ENCODE measurements at regions of chr5 and their contacts with region 1.

Region 1: GRCh38 chr5:69369369-69370121 is at the starts of genes AK6, RAD17 and TAF9:
- DNase-seq: peak; percentile 94 to 95
- H3K4me3 ChIP-seq: peak within 1 kb of the TSS; percentile 67
- H3K4me3 Mint-ChIP-seq: peak within 1 kb of the TSS; percentile 90
- H3K27ac Mint-ChIP-seq: peak within 1 kb of the TSS; percentile 99
- H3K4me1 ChIP-seq: peaks cover 15% of the 10 kb centered on the region
- H3K4me1 Mint-ChIP-seq: peaks cover 8% of the 10 kb centered on the region
- H3K27me3 ChIP-seq: no peaks in the 10 kb centered on the region
- H3K27me3 Mint-ChIP-seq: no peaks in the 10 kb centered on the region
- CTCF ChIP-seq: no peak
- total RNA-seq, gene AK6: 66.8 and 75.1 TPM in 2 replicates
- total RNA-seq, gene RAD17: 33.8 and 36.0 TPM in 2 replicates
- total RNA-seq, gene TAF9: 92.5 and 101 TPM in 2 replicates

Region 2: DNA sequence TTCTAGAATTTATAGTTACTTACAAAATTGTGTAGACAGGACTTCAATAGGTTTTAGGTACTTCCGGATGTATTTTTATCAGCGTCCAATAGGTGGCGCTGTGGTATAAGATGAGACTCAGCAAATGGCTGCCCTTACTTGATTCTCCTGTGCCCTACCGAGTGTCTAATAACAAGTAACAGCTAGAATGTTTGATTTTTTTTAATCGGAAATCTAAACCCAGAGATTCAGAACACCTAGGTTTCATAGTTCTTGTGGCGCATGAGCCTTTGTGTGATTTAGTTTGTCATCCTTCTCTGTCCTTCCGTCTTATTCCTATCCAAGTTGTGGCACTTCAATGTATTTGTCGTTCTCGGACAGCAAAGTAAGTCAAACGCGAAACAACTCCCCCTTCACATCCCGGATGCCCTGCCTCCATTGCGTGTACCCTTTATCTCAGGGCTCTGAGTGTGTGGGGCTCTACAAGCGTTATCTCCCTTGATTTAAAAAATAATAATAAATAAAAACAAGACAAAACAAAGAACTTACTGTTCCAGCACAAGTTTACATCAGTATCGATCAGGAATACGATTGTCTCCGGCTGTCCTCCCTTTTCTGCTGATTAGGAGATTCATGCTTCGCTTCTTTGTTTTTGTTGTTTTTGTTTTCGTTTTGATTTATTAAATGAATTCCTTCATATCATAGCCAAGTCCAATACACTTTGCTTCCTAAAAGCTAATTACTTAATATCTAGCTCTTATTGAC is 326.5 kb before region 1 on chr5:
- CTCF ChIA-PET with region 1: no interaction called
- POLR2A ChIA-PET with region 1: no interaction called
- intact Hi-C with region 1: loop called (anchors 5 kb)
- DNase-seq: peak; percentile 80 to 81
- H3K4me3 ChIP-seq: peak overlapping the region; percentile 45
- H3K4me3 Mint-ChIP-seq: peak overlapping the region; percentile 89
- H3K27ac Mint-ChIP-seq: peak overlapping the region; percentile 71
- H3K4me1 ChIP-seq: peaks cover 6% of the 10 kb centered on the region; the same call in 1 of the 2 replicates
- H3K4me1 Mint-ChIP-seq: peaks cover 6% of the 10 kb centered on the region
- H3K27me3 ChIP-seq: no peaks in the 10 kb centered on the region
- H3K27me3 Mint-ChIP-seq: no peaks in the 10 kb centered on the region
- CTCF ChIP-seq: peak; percentile 74 to 82